ENCODE measurements at regions of chr1 and their contacts with region 1.

Region 1: GRCh38 chr1:167486090-167486824 is 32.1 kb downstream of the CD247 start:
- DNase-seq: no peak
- ATAC-seq: no peak
- H3K4me3 ChIP-seq: peak overlapping the region; percentile 6
- H3K4me3 Mint-ChIP-seq: peak overlapping the region; percentile 74 to 88 (median 84)
- H3K27ac ChIP-seq: peak overlapping the region; percentile 83
- H3K27ac Mint-ChIP-seq: peak overlapping the region; percentile 84 to 99 (median 98)
- H3K4me1 ChIP-seq: peaks cover 65 to 93% of the 10 kb centered on the region in 2 donors
- H3K4me1 Mint-ChIP-seq: peaks cover 63 to 100% (median 97%) of the 10 kb centered on the region in 7 donors
- H3K27me3 ChIP-seq: no peaks in the 10 kb centered on the region
- H3K27me3 Mint-ChIP-seq: no peaks in the 10 kb centered on the region

Region 2: GRCh38 chr1:167467126-167467710 is 19.0 kb before region 1 on chr1:
- CTCF ChIA-PET with region 1: no interaction called
- POLR2A ChIA-PET with region 1: interaction called, 52 read pairs
- intact Hi-C with region 1: no loop called
- DNase-seq: no peak
- ATAC-seq: peak; percentile 57
- H3K4me3 ChIP-seq: no peak overlapping the region
- H3K4me3 Mint-ChIP-seq: peak overlapping the region in 8 of 10 donors; percentile 29 to 82 (median 59)
- H3K27ac ChIP-seq: peak overlapping the region; percentile 69
- H3K27ac Mint-ChIP-seq: peak overlapping the region in 8 of 9 donors; percentile 86 to 98 (median 92)
- H3K4me1 ChIP-seq: peaks cover under 1 to 79% of the 10 kb centered on the region in 2 donors
- H3K4me1 Mint-ChIP-seq: peaks cover 39 to 99% (median 92%) of the 10 kb centered on the region in 7 donors
- H3K27me3 ChIP-seq: no peaks in the 10 kb centered on the region
- H3K27me3 Mint-ChIP-seq: no peaks in the 10 kb centered on the region

Region 3: DNA sequence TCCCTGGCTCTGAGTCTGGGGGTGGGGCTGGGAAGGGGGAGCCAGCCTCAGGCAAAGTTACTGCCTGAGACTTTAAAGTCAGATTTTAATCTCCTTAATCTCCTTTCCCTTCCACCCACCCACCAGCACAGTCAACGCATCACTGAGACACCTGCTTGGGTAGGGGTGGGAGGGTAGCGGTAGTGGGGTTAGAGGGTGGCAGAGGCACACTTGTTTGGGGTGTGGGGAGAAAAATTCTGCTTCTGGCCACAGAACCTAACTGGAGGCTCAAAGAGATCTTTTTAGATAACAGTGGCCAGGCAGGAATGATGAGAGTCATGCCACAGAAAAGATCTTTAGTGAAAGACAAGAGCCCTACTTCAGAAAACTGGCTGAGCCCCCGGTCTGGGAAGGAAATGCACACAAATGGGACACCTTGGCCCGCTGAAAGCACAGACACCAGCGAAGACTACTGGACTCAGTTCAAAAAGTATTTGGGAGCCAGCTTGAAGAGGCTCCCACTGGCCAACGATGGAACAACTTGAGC is 12.0 kb before region 1 on chr1:
- CTCF ChIA-PET with region 1: interaction called, 3 read pairs
- POLR2A ChIA-PET with region 1: interaction called, 52 read pairs
- intact Hi-C with region 1: loop called (anchors 1 kb)
- DNase-seq: peak in 8 of 9 donors; percentile 41 to 87 (median 58)
- ATAC-seq: peak; percentile 89
- H3K4me3 ChIP-seq: peak overlapping the region; percentile 49
- H3K4me3 Mint-ChIP-seq: peak overlapping the region; percentile 52 to 98 (median 86)
- H3K27ac ChIP-seq: peak overlapping the region; percentile 75
- H3K27ac Mint-ChIP-seq: peak overlapping the region; percentile 47 to 98 (median 95)
- H3K4me1 ChIP-seq: peaks cover 36 to 81% of the 10 kb centered on the region in 2 donors
- H3K4me1 Mint-ChIP-seq: peaks cover 57 to 100% (median 94%) of the 10 kb centered on the region in 7 donors
- H3K27me3 ChIP-seq: no peaks in the 10 kb centered on the region
- H3K27me3 Mint-ChIP-seq: no peaks in the 10 kb centered on the region

Region 4: GRCh38 chr1:167499664-167500101 is 13.4 kb after region 1 on chr1:
- CTCF ChIA-PET with region 1: interaction called, 3 read pairs
- POLR2A ChIA-PET with region 1: interaction called, 38 read pairs
- intact Hi-C with region 1: no loop called
- DNase-seq: peak in 6 of 9 donors; percentile 51 to 74 (median 55)
- ATAC-seq: peak; percentile 76
- H3K4me3 ChIP-seq: peak overlapping the region; percentile 8
- H3K4me3 Mint-ChIP-seq: peak overlapping the region; percentile 49 to 88 (median 68)
- H3K27ac ChIP-seq: peak overlapping the region; percentile 96
- H3K27ac Mint-ChIP-seq: peak overlapping the region; percentile 77 to 100 (median 94)
- H3K4me1 ChIP-seq: peaks cover 55 to 99% of the 10 kb centered on the region in 2 donors
- H3K4me1 Mint-ChIP-seq: peaks cover 76 to 100% (median 98%) of the 10 kb centered on the region in 7 donors
- H3K27me3 ChIP-seq: no peaks in the 10 kb centered on the region
- H3K27me3 Mint-ChIP-seq: no peaks in the 10 kb centered on the region

Region 5: DNA sequence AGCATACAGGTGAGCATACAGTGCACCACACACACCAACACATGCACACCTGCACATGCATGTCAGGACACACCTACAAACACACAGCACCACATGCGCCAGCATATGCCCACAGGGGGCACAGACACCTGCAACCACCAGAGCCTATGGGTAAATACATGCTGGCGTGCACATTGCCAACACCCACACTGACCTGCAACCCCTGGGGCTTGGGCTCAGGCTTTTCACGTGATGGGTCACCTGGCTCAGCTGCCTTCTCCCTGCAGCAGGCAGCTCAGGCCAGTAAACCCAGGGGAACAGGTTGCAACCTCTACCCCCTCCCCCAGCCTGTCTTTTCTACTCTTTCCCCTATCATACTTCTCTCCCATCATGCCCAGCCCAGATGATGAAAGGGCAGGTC is 24.0 kb after region 1 on chr1:
- CTCF ChIA-PET with region 1: interaction called, 3 read pairs
- POLR2A ChIA-PET with region 1: interaction called, 152 read pairs
- intact Hi-C with region 1: loop called in 1 of 2 experiments (anchors 5 kb)
- DNase-seq: peak in 1 of 9 donors; percentile 38
- ATAC-seq: peak; percentile 37
- H3K4me3 ChIP-seq: peak overlapping the region; percentile 29
- H3K4me3 Mint-ChIP-seq: peak overlapping the region; percentile 58 to 100 (median 90)
- H3K27ac ChIP-seq: peak overlapping the region; percentile 96
- H3K27ac Mint-ChIP-seq: peak overlapping the region; percentile 80 to 100 (median 94)
- H3K4me1 ChIP-seq: peaks cover 48 to 73% of the 10 kb centered on the region in 2 donors
- H3K4me1 Mint-ChIP-seq: peaks cover 57 to 98% (median 85%) of the 10 kb centered on the region in 7 donors
- H3K27me3 ChIP-seq: no peaks in the 10 kb centered on the region
- H3K27me3 Mint-ChIP-seq: no peaks in the 10 kb centered on the region

Region 6: DNA sequence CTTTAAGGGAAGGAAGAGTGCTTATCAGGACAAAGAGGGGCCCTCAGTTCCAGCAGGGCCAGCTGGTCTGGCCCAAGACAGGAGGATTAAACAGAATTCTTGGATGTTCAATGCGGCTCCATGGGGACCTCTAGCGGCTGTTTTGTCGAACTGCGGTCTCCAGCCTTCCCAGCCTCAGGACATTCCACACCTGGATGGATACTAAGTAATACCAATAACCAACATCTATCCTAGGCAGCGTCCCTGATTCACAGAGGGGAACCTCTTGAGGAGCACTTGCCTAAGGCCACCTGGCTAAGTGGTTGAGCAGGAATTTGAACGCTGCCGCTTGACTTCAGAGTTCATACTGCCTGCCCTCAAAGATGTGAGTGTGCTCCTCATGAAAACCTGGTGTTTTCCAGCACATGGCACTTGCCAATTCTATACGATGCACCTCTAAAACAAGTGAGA is 47.6 kb after region 1 on chr1:
- CTCF ChIA-PET with region 1: interaction called, 11 read pairs
- POLR2A ChIA-PET with region 1: no interaction called
- intact Hi-C with region 1: loop called in 1 of 2 experiments (anchors 5 kb)
- DNase-seq: peak in 8 of 9 donors; percentile 50 to 72 (median 58)
- ATAC-seq: peak; percentile 87
- H3K4me3 ChIP-seq: no peak overlapping the region
- H3K4me3 Mint-ChIP-seq: no peak overlapping the region
- H3K27ac ChIP-seq: no peak overlapping the region
- H3K27ac Mint-ChIP-seq: peak overlapping the region in 1 of 9 donors; percentile 30
- H3K4me1 ChIP-seq: no peaks in the 10 kb centered on the region
- H3K4me1 Mint-ChIP-seq: peaks cover 0 to 11% (median 2%) of the 10 kb centered on the region in 7 donors
- H3K27me3 ChIP-seq: no peaks in the 10 kb centered on the region
- H3K27me3 Mint-ChIP-seq: peaks cover 0 to 3% (median 0%) of the 10 kb centered on the region in 5 donors

Region 7: GRCh38 chr1:167803358-167804207 is 317.3 kb after region 1 on chr1:
- CTCF ChIA-PET with region 1: no interaction called
- POLR2A ChIA-PET with region 1: no interaction called
- intact Hi-C with region 1: no loop called
- DNase-seq: peak; percentile 41 to 83 (median 67)
- ATAC-seq: peak; percentile 95
- H3K4me3 ChIP-seq: no peak overlapping the region
- H3K4me3 Mint-ChIP-seq: peak overlapping the region in 9 of 10 donors; percentile 5 to 74 (median 60)
- H3K27ac ChIP-seq: no peak overlapping the region
- H3K27ac Mint-ChIP-seq: peak overlapping the region in 6 of 9 donors; percentile 38 to 93 (median 83)
- H3K4me1 ChIP-seq: peaks cover 20 to 21% of the 10 kb centered on the region in 2 donors
- H3K4me1 Mint-ChIP-seq: peaks cover 16 to 29% (median 26%) of the 10 kb centered on the region in 7 donors
- H3K27me3 ChIP-seq: no peaks in the 10 kb centered on the region
- H3K27me3 Mint-ChIP-seq: peaks cover 0 to 7% (median 0%) of the 10 kb centered on the region in 5 donors

Measured in naive thymus-derived CD4-positive, alpha-beta T cell (primary cell).